Heart left ventricle (tissue), 16 donors: ENCODE measurements at regions of chr12 and their contacts with region 1.

Region 1: DNA sequence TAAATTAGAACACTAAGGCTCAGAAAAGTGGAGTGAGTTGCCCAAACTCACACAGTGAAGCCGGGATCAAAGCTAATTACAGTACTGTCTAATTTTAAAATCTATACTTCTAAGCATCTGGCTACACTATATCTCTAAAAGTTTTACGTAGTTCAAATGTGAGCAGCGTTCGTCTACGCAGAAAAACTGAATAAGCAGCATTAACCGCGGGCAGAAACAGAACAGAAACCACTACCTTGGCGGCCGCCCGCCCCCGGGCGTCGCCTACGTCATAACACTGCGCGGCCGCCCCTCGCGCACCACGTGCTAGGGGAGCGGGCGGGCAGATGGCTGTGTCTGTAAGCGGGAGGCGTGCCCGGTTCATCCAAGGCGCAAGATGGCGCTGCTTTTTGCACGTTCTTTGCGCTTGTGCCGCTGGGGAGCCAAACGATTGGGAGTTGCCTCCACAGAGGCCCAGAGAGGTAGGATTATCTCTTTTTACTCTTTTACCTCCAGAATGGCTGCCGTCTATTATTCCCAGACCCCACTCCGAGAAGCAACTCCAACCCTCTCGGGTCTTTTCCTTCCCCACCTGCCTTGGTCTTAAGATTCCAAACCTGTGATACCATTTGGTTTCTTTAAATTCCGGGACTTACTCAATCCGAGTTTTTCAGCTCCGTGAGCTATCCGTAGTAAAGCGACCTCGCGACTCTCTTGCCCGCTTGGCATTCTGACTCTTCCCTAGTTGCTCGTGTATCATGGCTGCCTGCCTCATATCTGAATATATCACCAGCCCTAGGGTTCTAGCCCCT is at the start of gene SPRYD4:
- DNase-seq: peak; percentile 94 to 96 (median 94)
- ATAC-seq: peak; percentile 96 to 99 (median 97)
- H3K4me3 ChIP-seq: peak within 1 kb of the TSS; percentile 53 to 95 (median 78)
- H3K27ac ChIP-seq: peak within 1 kb of the TSS; percentile 40 to 95 (median 89)
- H3K4me1 ChIP-seq: peaks cover 0 to 34% (median 10%) of the 10 kb centered on the region in 12 donors
- H3K27me3 ChIP-seq: no peaks in the 10 kb centered on the region
- CTCF ChIP-seq: peak in 10 of 12 donors; percentile 18 to 64 (median 38)
- POLR2A ChIP-seq: peak in 1 of 2 donors; percentile 84
- total RNA-seq, gene SPRYD4: 2.2 to 4.7 (median 3.0) TPM

Region 2: GRCh38 chr12:56206457-56207166 is 261.8 kb before region 1 on chr12:
- intact Hi-C with region 1: loop called in 1 of 10 experiments (anchors 10 kb)
- DNase-seq: peak; percentile 34 to 70 (median 57)
- ATAC-seq: peak; percentile 28 to 76 (median 68)
- H3K4me3 ChIP-seq: no peak overlapping the region
- H3K27ac ChIP-seq: no peak overlapping the region
- H3K4me1 ChIP-seq: peaks cover 0 to 17% (median 1%) of the 10 kb centered on the region in 12 donors
- H3K27me3 ChIP-seq: no peaks in the 10 kb centered on the region
- CTCF ChIP-seq: peak; percentile 34 to 63 (median 50)
- POLR2A ChIP-seq: no peak

Region 3: GRCh38 chr12:56315622-56316473 is 152.6 kb before region 1 on chr12 and contains the start of gene CNPY2:
- intact Hi-C with region 1: loop called in 2 of 10 experiments (anchors 5 to 10 kb)
- DNase-seq: peak; percentile 95 to 97 (median 97)
- ATAC-seq: peak; percentile 93 to 96 (median 96)
- H3K4me3 ChIP-seq: peak within 1 kb of the TSS; percentile 44 to 97 (median 88)
- H3K27ac ChIP-seq: peak within 1 kb of the TSS; percentile 84 to 99 (median 93)
- H3K4me1 ChIP-seq: peaks cover 0 to 20% (median 13%) of the 10 kb centered on the region in 12 donors
- H3K27me3 ChIP-seq: no peaks in the 10 kb centered on the region
- CTCF ChIP-seq: peak in 8 of 12 donors; percentile 14 to 36 (median 24)
- POLR2A ChIP-seq: peak in 1 of 2 donors; percentile 80
- total RNA-seq, gene CNPY2: 26.8 to 61.0 (median 35.6) TPM

Region 4: GRCh38 chr12:56359851-56360767 is 108.3 kb before region 1 on chr12 and contains the start of gene STAT2:
- intact Hi-C with region 1: loop called in 4 of 10 experiments (anchors 1 to 10 kb)
- DNase-seq: peak; percentile 99 to 100 (median 99)
- ATAC-seq: peak; percentile 98 to 99 (median 99)
- H3K4me3 ChIP-seq: peak within 1 kb of the TSS; percentile 64 to 91 (median 83)
- H3K27ac ChIP-seq: peak within 1 kb of the TSS; percentile 68 to 98 (median 92)
- H3K4me1 ChIP-seq: peaks cover 0 to 40% (median 20%) of the 10 kb centered on the region in 12 donors
- H3K27me3 ChIP-seq: no peaks in the 10 kb centered on the region
- CTCF ChIP-seq: peak in 1 of 12 donors; percentile 9
- POLR2A ChIP-seq: peak; percentile 17 to 80
- total RNA-seq, gene STAT2: 31.4 to 150 (median 37.1) TPM

Region 5: GRCh38 chr12:56785141-56785865 is 316.9 kb after region 1 on chr12:
- intact Hi-C with region 1: no loop called
- DNase-seq: no peak
- ATAC-seq: no peak
- H3K4me3 ChIP-seq: no peak overlapping the region
- H3K27ac ChIP-seq: no peak overlapping the region
- H3K4me1 ChIP-seq: no peaks in the 10 kb centered on the region
- H3K27me3 ChIP-seq: no peaks in the 10 kb centered on the region
- CTCF ChIP-seq: no peak
- POLR2A ChIP-seq: no peak